ENCODE measurements at regions of chr10 and their contacts with region 1.

Region 1: DNA sequence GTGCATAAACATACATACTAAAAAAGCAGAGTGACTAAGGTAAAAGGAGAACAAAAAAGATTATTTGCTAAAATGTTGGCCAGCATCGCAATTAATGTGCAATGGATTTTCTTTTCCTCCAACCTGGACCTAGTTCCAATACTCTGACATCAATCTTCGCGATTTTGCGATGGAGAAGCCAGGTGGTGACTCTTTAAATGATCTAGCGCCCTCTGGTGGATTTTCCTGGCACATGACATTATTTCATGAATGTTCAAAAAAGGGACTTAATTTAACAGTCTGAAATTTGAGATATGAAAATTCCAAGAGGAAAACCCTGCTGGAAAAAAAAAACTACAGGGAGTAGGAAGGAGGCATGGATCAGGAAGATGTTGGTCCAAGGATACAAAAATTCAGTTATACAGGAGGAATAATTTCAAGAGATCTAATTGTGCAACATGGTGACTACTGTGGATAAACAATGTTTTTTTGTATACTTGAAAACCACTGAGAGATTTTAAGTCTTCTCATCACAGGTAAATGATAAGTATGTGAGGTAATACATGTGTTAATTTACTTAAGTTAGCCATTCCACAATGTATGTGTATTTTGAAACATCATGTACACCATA is 4.3 kb upstream of the KCNMA1 start:
- DNase-seq: peak; percentile 78
- H3K4me3 Mint-ChIP-seq: no peak overlapping the region
- H3K27ac Mint-ChIP-seq: no peak overlapping the region
- H3K4me1 Mint-ChIP-seq: peaks cover 4% of the 10 kb centered on the region
- H3K27me3 Mint-ChIP-seq: peaks cover 46% of the 10 kb centered on the region
- CTCF ChIP-seq: peak; percentile 64

Region 2: DNA sequence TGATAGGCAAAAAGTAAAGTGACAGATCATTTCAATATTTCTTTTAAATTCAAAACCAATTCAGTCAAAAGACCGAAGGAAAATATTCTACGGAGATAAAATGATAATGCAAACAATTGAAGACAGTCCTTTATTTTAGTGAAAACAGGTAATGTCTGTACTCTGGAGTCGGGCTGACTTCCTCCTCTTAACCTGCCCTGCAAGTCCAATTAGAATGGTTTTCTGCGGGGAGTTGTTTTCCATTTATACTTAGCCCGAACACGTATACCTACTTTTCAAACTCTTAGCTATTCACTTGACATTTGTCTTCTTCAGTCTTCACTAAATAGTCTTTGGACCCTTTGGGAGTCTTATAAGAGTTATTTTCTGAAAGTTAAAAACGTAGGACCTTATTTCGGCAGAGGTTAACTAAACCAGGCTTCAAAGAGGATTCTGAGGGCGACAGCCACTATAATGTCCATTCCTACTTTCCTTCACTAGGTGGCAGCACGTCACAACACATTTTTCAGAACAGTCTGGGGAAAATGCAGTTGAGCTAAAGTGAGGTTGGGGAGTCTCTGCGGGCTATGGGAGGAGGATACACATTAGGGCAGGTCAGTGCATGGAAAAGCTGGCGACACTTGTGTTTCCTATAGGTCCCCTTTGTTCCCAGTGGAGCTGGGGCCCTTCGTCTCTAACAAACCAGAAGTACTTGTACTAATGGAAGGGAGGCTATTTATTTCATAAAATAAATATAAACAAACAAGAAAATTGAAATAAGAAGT is 476.3 kb before region 1 on chr10:
- CTCF ChIA-PET with region 1: interaction called, 16 read pairs
- intact Hi-C with region 1: loop called (anchors 2 kb)
- DNase-seq: peak; percentile 72
- H3K4me3 Mint-ChIP-seq: peak overlapping the region; percentile 66
- H3K27ac Mint-ChIP-seq: peak overlapping the region; percentile 70
- H3K4me1 Mint-ChIP-seq: peaks cover 33% of the 10 kb centered on the region
- H3K27me3 Mint-ChIP-seq: peaks cover 7% of the 10 kb centered on the region
- CTCF ChIP-seq: peak; percentile 89

Region 3: DNA sequence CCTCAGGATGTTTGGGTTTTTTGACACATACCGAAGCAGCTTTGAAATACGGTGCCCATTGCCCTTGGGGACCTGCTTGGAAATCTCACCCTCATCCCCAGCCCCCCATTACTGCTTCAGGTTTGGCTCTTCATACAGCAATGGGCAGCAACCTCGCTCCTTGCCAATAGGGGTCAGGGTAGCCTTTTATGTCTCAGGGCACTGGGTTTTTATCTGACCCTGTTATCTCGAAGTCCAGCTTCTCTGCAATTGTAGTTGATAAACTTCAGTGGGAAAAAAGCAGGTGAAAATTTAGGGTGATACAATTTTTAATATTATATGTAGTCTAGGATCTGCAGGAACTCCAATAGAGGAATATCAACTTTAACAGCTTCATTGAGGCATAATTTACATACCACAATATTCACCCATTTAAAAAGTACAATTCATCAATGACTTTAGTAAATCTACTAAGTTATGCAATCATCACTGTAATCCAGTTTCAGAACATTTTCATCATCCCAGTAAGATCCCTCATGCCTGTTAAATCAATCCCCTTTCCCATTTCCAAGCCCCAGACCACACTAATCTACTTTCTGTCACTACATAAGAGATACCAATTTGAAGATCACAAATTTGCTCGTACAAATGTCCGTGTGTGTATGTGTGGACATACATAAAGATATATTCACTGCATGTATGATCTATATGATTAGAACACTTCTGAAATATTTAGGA is 390.4 kb before region 1 on chr10:
- CTCF ChIA-PET with region 1: interaction called, 3 read pairs
- intact Hi-C with region 1: loop called (anchors 1 kb)
- DNase-seq: peak; percentile 62
- H3K4me3 Mint-ChIP-seq: no peak overlapping the region
- H3K27ac Mint-ChIP-seq: no peak overlapping the region
- H3K4me1 Mint-ChIP-seq: peaks cover 13% of the 10 kb centered on the region
- H3K27me3 Mint-ChIP-seq: peaks cover 17% of the 10 kb centered on the region
- CTCF ChIP-seq: peak; percentile 70

Region 4: DNA sequence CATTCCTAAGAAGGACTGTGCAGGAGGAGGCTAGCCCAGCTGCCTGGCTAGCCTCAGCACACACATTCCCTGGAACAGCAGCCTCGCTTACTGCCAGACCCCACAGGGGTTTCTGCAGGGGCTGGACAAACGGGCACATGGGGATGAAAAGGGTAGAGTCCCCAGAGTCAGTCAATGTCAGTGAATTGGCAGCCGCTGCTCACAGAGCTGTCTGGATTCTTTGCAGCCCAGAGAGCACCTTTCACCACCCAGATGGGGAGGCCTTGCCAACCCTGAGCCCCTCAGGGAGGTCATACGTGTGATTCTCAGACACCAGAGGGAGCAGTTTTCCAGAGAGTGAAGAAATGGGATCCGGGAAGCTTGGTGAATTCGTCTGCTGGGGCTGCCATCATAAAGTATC is 147.6 kb before region 1 on chr10:
- CTCF ChIA-PET with region 1: interaction called, 3 read pairs
- intact Hi-C with region 1: loop called (anchors 5 kb)
- DNase-seq: peak; percentile 40
- H3K4me3 Mint-ChIP-seq: no peak overlapping the region
- H3K27ac Mint-ChIP-seq: no peak overlapping the region
- H3K4me1 Mint-ChIP-seq: no peaks in the 10 kb centered on the region
- H3K27me3 Mint-ChIP-seq: peaks cover 65% of the 10 kb centered on the region
- CTCF ChIP-seq: no peak

Region 5: GRCh38 chr10:77710759-77711682 is 69.1 kb after region 1 on chr10:
- CTCF ChIA-PET with region 1: interaction called, 9 read pairs
- intact Hi-C with region 1: loop called (anchors 5 kb)
- DNase-seq: peak; percentile 93
- H3K4me3 Mint-ChIP-seq: peak overlapping the region; percentile 42
- H3K27ac Mint-ChIP-seq: no peak overlapping the region
- H3K4me1 Mint-ChIP-seq: no peaks in the 10 kb centered on the region
- H3K27me3 Mint-ChIP-seq: no peaks in the 10 kb centered on the region
- CTCF ChIP-seq: peak; percentile 98

Measured in Calu3 (cell line).